ENCODE measurements at regions of chr1 and their contacts with region 1.

Region 1: GRCh38 chr1:112706908-112707663 is at the start of gene RHOC:
- DNase-seq: peak; percentile 89
- H3K4me3 ChIP-seq: peak within 1 kb of the TSS; percentile 99
- H3K27ac ChIP-seq: peak within 1 kb of the TSS; percentile 99
- H3K4me1 ChIP-seq: peaks cover 53% of the 10 kb centered on the region
- H3K27me3 ChIP-seq: no peaks in the 10 kb centered on the region
- CTCF ChIP-seq: peak; percentile 96
- total RNA-seq, gene RHOC: 129 TPM

Region 2: DNA sequence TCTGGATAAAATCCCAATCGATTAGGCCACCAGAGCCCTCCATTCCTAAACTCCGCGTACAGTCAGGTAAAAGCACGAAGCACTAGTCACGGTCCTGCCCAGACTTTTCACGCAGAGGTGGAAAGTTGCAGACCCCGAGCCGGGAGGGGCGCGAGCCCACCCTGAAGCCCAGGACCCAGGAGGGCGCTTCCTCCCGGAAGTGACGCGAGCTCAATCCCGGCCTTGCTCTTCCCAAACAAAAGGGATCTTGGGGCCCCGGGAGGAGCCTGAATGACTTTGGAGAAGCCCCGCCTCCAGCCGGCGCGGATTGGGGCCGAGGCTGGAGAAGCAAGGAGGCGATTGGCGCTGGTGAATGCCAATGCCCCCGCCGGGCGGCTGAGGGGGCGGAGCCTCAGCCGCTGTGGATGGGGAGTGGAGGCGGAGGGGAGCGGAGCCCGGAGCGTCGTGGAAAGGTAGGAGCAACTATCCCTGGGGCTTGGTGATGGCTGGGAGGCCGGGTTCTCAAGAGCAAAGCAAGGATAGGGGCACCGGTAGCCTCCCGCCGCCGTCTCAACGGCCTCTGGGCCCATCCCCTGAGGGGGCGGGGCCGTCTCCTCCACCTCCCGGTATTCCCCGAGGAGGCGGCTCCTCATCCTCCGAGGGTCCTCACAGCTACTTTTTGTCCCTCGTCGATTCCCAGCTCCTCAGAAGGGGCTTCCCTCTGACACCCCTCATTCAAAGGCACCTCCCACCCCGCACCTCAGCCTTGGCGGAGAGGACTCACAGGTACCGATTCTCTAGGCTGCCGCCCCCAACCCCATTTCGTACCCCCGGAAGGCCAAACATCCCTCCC is 311.0 kb before region 1 on chr1 and contains the start of gene CTTNBP2NL:
- intact Hi-C with region 1: loop called (anchors 5 kb)
- DNase-seq: peak; percentile 98
- H3K4me3 ChIP-seq: peak within 1 kb of the TSS; percentile 91
- H3K27ac ChIP-seq: peak within 1 kb of the TSS; percentile 93
- H3K4me1 ChIP-seq: peaks cover 82% of the 10 kb centered on the region
- H3K27me3 ChIP-seq: no peaks in the 10 kb centered on the region
- CTCF ChIP-seq: no peak
- total RNA-seq, gene CTTNBP2NL: 14.3 TPM

Region 3: DNA sequence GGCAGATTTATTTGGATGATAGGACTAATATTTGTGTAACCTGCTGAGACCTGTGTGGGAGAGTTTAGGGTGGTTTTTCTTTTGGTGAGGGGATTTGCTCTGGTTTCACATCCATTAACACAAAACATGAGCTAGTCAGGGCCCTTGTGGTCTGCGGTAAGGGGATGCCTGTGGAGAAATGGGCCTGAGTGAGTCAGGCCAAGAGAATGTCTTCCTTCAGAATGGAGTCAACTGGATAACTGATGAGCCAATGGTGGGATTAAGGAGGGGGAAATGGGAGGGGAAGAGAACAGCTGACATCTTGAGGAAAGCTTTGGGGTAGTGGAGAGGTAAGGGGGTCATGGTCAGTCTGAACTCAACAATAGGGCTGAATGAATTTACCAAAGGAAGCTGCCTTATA is 184.5 kb before region 1 on chr1:
- intact Hi-C with region 1: no loop called
- DNase-seq: no peak
- H3K4me3 ChIP-seq: no peak overlapping the region
- H3K27ac ChIP-seq: no peak overlapping the region
- H3K4me1 ChIP-seq: peaks cover 38% of the 10 kb centered on the region
- H3K27me3 ChIP-seq: no peaks in the 10 kb centered on the region
- CTCF ChIP-seq: no peak

Region 4: DNA sequence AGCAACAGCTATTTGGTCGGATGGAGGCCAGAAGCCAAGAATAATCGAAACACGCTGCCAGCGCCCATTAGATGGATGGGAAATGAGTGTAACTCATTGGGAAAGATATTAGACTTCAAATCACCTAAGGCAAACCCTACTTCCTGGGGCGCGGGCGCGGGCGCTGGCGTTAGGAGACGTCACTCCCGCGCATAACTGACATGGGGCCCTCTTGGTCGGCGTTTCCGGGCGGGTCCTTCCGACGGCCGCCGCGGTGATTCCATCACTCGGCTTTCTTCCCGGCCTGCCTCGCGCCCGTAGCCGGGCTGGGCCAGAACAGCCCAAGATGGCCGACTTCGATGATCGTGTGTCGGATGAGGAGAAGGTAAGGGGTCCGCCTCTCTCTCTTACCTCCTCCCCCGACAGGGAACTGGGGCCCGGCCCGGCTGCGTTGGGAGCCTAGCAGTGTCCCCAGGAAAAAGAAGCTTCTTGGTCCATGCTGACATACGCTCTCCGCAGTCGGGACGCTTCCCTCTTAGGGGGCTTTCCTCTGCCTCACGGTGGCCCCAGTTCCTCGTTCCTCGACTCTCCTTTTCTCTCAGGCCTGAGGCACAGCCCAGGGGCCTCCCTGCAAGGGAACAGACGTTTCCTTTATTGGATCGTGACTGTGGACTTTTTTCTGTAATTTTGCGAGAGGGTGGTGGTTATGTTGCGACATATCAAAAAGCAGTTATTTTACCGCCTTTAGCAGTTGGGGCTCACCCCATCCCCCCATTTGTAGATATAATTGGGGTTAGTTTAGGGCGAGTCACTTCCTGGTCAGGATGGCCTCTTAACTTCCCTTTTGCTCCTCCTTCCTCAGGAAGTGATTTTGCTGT is 87.3 kb before region 1 on chr1 and contains the start of gene CAPZA1:
- intact Hi-C with region 1: loop called (anchors 5 kb)
- DNase-seq: peak; percentile 91
- H3K4me3 ChIP-seq: peak within 1 kb of the TSS; percentile 90
- H3K27ac ChIP-seq: peak within 1 kb of the TSS; percentile 99
- H3K4me1 ChIP-seq: peaks cover 79% of the 10 kb centered on the region
- H3K27me3 ChIP-seq: no peaks in the 10 kb centered on the region
- CTCF ChIP-seq: no peak
- total RNA-seq, gene CAPZA1: 24.6 TPM